Heart right ventricle (tissue), 16 donors: ENCODE measurements at regions of chr3 and their contacts with region 1.

Region 1: DNA sequence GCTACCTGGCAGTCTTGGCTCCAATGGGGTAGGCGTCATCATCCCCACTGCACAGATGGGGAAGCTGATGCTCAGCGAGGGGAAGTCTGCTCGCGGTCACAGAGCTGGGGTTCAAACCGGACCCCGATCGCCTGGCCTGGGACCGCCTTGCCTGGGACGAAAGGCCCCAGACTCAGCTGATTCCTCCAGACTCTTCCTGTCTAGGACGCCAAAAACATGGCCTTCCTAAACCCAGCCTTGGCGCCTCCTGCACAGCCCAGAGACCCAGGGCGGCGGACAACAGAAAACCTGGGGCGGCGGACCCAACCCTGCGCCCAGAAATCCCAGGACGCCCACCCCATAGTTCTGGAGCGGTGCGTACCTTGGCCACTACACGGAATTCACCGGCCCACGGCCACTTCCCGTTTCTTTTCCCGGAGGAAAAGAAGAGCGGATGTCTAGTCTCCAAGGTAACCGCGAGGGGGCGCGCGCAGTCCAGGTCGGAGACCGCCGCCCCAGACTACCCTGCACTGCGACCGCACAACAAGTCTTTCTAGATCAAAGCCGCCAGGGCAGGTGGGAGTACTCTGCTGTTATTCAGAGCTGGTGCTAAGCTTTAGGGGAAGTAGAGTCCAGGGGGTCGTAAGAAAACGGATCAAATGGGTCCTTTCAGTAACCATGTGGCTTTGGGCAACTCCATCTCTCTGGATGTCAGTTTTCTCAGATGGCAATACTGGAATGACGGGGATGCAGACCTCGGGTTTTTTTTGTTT is 4.9 kb upstream of the IL17RD start:
- DNase-seq: peak; percentile 76 to 77
- ATAC-seq: peak; percentile 69 to 91 (median 83)
- H3K4me3 ChIP-seq: peak overlapping the region in 9 of 10 donors; percentile 34 to 77 (median 63)
- H3K27ac ChIP-seq: peak overlapping the region in 7 of 10 donors; percentile 42 to 73 (median 57)
- H3K4me1 ChIP-seq: peaks cover 0 to 21% (median 8%) of the 10 kb centered on the region in 9 donors
- H3K27me3 ChIP-seq: peaks cover 0 to 33% (median 0%) of the 10 kb centered on the region in 7 donors
- CTCF ChIP-seq: peak; percentile 74 to 92 (median 89)

Region 2: GRCh38 chr3:57100046-57100695 is 69.9 kb before region 1 on chr3:
- intact Hi-C with region 1: loop called in 5 of 10 experiments (anchors 5 kb)
- DNase-seq: peak in 1 of 2 donors; percentile 72
- ATAC-seq: peak in 7 of 8 donors; percentile 60 to 86 (median 76)
- H3K4me3 ChIP-seq: no peak overlapping the region
- H3K27ac ChIP-seq: no peak overlapping the region
- H3K4me1 ChIP-seq: peaks cover 0 to 8% (median 0%) of the 10 kb centered on the region in 9 donors
- H3K27me3 ChIP-seq: no peaks in the 10 kb centered on the region
- CTCF ChIP-seq: peak; percentile 81 to 95 (median 91)

Region 3: DNA sequence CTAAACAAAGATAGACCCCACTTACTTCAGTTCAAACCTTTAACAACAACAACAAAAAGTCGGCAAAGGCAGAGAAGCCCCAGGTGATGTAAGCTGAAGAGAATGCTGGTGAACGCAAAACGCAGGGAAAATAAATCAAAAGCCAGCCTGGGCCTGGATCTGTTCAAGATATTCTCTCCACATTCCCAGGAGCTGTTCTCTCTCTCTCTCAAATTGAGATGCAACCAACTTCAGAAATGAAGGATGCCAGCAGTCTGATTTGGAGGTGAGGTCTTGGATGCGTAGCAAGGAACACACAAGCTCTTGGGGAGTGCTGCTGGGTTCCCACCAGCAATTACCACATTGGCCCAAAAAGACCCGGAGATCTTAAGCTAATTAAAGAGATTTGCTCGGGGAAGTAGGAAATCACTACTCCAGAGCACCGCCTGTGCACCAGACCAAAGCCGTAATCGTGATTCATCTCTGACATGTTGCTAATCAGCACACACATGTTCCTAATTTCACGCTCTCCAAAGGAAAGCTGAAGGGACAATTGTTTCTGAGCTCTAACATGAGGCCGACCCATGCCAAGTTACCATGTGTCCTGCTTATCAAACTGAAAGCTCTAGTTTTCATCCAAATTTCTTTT is 42.0 kb before region 1 on chr3:
- intact Hi-C with region 1: loop called in 1 of 10 experiments (anchors 5 kb)
- DNase-seq: no peak
- ATAC-seq: peak in 4 of 8 donors; percentile 44 to 78 (median 54)
- H3K4me3 ChIP-seq: no peak overlapping the region
- H3K27ac ChIP-seq: peak overlapping the region in 7 of 10 donors; percentile 0 to 50 (median 11)
- H3K4me1 ChIP-seq: peaks cover 0 to 51% (median 8%) of the 10 kb centered on the region in 9 donors
- H3K27me3 ChIP-seq: no peaks in the 10 kb centered on the region
- CTCF ChIP-seq: no peak

Region 4: DNA sequence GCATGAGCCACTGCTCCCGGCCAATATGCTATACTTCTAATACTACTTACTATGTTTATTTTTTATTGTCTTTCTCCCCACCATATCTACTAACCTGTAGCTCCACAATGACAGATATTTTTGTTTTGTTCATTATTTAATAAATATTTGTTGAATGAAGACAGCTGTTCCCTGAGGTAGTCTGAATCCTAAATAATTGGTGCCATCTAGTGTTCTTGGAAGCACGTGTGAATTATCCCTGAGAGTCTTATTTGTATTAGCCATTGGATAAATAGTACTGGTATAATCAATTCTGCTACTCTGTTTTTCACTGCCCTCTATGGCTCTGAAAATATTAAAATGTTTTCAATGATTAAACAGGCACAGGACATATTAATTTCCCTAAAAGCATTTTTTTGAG is 51.8 kb after region 1 on chr3:
- intact Hi-C with region 1: loop called in 9 of 10 experiments (anchors 5 to 10 kb)
- DNase-seq: no peak
- ATAC-seq: no peak
- H3K4me3 ChIP-seq: no peak overlapping the region
- H3K27ac ChIP-seq: no peak overlapping the region
- H3K4me1 ChIP-seq: peaks cover 0 to 11% (median 5%) of the 10 kb centered on the region in 9 donors
- H3K27me3 ChIP-seq: no peaks in the 10 kb centered on the region
- CTCF ChIP-seq: peak in 8 of 9 donors; percentile 18 to 58 (median 42)

Region 5: GRCh38 chr3:57227204-57227929 is 57.3 kb after region 1 on chr3 and contains the start of gene APPL1:
- intact Hi-C with region 1: loop called in 9 of 10 experiments (anchors 5 to 10 kb)
- DNase-seq: peak; percentile 93 to 96
- ATAC-seq: peak; percentile 98 to 99 (median 99)
- H3K4me3 ChIP-seq: peak within 1 kb of the TSS; percentile 65 to 97 (median 82)
- H3K27ac ChIP-seq: peak within 1 kb of the TSS; percentile 90 to 97 (median 95)
- H3K4me1 ChIP-seq: peaks cover 0 to 37% (median 30%) of the 10 kb centered on the region in 9 donors
- H3K27me3 ChIP-seq: no peaks in the 10 kb centered on the region
- CTCF ChIP-seq: peak in 2 of 9 donors; percentile 6 to 11
- total RNA-seq, gene APPL1: 44.7 to 58.7 (median 51.0) TPM

Region 6: DNA sequence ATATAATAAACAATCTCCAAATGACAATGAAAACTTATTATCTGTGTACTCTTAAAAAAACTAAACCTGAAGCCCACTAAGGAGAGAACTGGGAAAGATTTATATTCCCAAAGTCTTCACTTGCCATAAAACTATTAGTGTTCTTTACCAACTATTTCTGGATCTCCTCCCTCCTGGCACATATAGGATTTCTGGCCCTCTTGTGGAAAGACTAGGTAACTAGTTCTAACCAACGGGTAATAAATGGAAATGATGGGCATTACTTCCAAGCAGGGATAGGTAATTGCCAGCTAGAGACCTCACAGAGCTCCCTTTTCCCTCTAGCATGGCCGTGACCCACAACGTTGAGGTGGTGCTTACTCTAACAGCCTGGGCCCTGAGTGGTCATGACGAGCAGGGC is 264.0 kb after region 1 on chr3:
- intact Hi-C with region 1: loop called in 2 of 10 experiments (anchors 10 kb)
- DNase-seq: no peak
- ATAC-seq: peak in 1 of 8 donors; percentile 42
- H3K4me3 ChIP-seq: no peak overlapping the region
- H3K27ac ChIP-seq: no peak overlapping the region
- H3K4me1 ChIP-seq: no peaks in the 10 kb centered on the region
- H3K27me3 ChIP-seq: no peaks in the 10 kb centered on the region
- CTCF ChIP-seq: peak in 8 of 9 donors; percentile 18 to 49 (median 38)